B cell (primary cell): ENCODE measurements at regions of chr1 and their contacts with region 1.

Region 1: GRCh38 chr1:48677306-48678287 is 99.1 kb downstream of the BEND5 start:
- DNase-seq: peak; percentile 67
- ATAC-seq: peak; percentile 49
- H3K4me3 ChIP-seq: no peak overlapping the region
- H3K4me3 Mint-ChIP-seq: peak overlapping the region; percentile 62
- H3K27ac ChIP-seq: no peak overlapping the region
- H3K27ac Mint-ChIP-seq: no peak overlapping the region
- H3K4me1 ChIP-seq: peaks cover 0 to 8% of the 10 kb centered on the region in 2 donors
- H3K4me1 Mint-ChIP-seq: peaks cover 7% of the 10 kb centered on the region
- H3K27me3 ChIP-seq: peaks cover 0 to 2% (median 0%) of the 10 kb centered on the region in 4 experiments
- H3K27me3 Mint-ChIP-seq: peaks cover 23% of the 10 kb centered on the region
- CTCF ChIP-seq: peak; percentile 80

Region 2: DNA sequence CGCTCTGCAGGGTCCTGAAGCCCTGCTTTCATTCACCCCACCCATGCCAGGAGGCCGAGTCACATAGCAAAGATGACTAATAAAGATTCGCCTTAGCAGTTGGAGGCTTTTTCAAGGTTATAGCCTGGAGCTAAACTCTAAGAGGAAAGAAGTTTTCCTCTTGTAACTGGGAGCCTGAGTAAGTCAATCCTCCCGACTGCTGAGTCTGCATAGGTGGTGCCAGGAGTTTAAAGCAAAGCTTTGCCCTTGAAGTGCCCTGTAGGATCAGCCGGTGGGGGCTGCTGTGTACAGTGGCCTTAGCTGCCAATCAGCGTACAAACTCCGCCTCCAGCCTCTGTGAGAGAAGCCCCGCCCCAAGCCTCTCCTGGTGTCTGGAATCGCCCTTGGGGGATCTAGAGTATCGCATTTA is 58.1 kb before region 1 on chr1:
- CTCF ChIA-PET with region 1: no interaction called
- POLR2A ChIA-PET with region 1: no interaction called
- intact Hi-C with region 1: no loop called
- DNase-seq: no peak
- ATAC-seq: no peak
- H3K4me3 ChIP-seq: no peak overlapping the region
- H3K4me3 Mint-ChIP-seq: no peak overlapping the region
- H3K27ac ChIP-seq: no peak overlapping the region
- H3K27ac Mint-ChIP-seq: no peak overlapping the region
- H3K4me1 ChIP-seq: no peaks in the 10 kb centered on the region
- H3K4me1 Mint-ChIP-seq: no peaks in the 10 kb centered on the region
- H3K27me3 ChIP-seq: no peaks in the 10 kb centered on the region
- H3K27me3 Mint-ChIP-seq: peaks cover 21% of the 10 kb centered on the region
- CTCF ChIP-seq: no peak

Region 3: DNA sequence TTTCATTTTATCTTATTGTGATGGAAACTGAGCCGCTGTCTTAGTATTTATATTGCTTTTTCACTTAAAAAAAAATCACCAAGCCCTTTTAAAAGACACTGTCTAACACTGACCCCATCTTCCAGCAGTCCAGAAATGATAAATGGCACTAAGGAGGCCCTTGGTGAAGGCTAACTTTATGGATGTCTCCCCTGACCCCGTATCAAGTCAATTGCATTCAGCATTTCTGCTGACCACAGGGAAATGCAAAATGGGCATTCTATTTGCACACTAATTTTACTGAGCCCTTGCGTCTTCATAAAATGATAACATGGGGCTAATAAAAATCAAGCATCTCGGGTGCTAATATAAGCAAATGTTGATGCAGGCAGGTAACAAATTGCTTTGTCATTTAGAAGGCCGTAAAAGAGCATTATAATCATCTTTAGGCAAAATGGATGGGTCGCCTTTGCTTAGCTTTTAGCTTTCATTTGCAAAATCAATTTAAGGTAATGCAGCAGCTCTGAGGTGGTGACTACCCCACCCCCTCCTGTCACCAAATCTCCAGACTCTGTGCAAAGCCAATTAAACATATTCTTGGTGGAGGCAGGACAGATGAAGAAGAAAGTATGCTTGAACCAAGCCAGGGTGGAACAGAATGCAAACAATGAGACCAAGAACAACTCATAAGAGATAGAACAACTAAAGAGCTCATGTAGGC is 11.7 kb before region 1 on chr1:
- CTCF ChIA-PET with region 1: interaction called, 13 read pairs
- POLR2A ChIA-PET with region 1: no interaction called
- intact Hi-C with region 1: no loop called
- DNase-seq: no peak
- ATAC-seq: no peak
- H3K4me3 ChIP-seq: no peak overlapping the region
- H3K4me3 Mint-ChIP-seq: no peak overlapping the region
- H3K27ac ChIP-seq: no peak overlapping the region
- H3K27ac Mint-ChIP-seq: no peak overlapping the region
- H3K4me1 ChIP-seq: no peaks in the 10 kb centered on the region
- H3K4me1 Mint-ChIP-seq: no peaks in the 10 kb centered on the region
- H3K27me3 ChIP-seq: no peaks in the 10 kb centered on the region
- H3K27me3 Mint-ChIP-seq: peaks cover 3% of the 10 kb centered on the region
- CTCF ChIP-seq: no peak

Region 4: GRCh38 chr1:48688102-48688760 is 10.6 kb after region 1 on chr1:
- CTCF ChIA-PET with region 1: interaction called, 16 read pairs
- POLR2A ChIA-PET with region 1: no interaction called
- intact Hi-C with region 1: no loop called
- DNase-seq: no peak
- ATAC-seq: no peak
- H3K4me3 ChIP-seq: no peak overlapping the region
- H3K4me3 Mint-ChIP-seq: no peak overlapping the region
- H3K27ac ChIP-seq: no peak overlapping the region
- H3K27ac Mint-ChIP-seq: no peak overlapping the region
- H3K4me1 ChIP-seq: no peaks in the 10 kb centered on the region
- H3K4me1 Mint-ChIP-seq: peaks cover 2% of the 10 kb centered on the region
- H3K27me3 ChIP-seq: no peaks in the 10 kb centered on the region
- H3K27me3 Mint-ChIP-seq: peaks cover 5% of the 10 kb centered on the region
- CTCF ChIP-seq: peak; percentile 41

Region 5: DNA sequence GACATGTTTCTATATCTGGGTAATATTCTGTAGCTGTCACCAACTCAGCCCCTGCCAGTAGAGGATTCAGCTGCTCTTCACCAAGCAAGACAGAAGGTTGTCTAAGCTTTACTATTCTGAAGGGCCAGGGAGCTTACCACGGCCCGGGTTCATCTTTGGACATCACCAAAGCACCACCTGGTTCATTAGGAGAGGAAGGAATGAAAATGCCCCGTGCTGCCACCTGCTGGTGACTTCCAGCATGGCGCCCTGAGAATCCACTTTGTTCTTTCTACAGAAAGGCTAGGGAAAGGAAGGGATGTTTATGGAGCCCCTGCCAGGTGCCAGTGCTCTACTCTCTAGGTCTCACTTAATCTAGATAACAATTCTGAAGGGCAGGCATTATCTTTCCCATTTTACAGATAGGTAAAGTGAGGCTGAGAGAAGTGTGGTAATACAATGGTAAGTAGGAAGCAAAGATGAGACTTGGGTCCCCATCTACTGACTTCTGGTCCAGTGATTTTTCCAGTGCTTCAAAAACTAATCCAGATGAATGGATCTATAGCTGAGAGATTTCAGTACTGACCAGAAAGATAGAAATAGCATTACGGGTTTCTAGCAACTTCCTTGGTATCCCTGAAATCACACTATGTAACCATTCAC is 19.6 kb after region 1 on chr1:
- CTCF ChIA-PET with region 1: interaction called, 21 read pairs
- POLR2A ChIA-PET with region 1: no interaction called
- intact Hi-C with region 1: no loop called
- DNase-seq: peak; percentile 58
- ATAC-seq: no peak
- H3K4me3 ChIP-seq: no peak overlapping the region
- H3K4me3 Mint-ChIP-seq: no peak overlapping the region
- H3K27ac ChIP-seq: no peak overlapping the region
- H3K27ac Mint-ChIP-seq: no peak overlapping the region
- H3K4me1 ChIP-seq: no peaks in the 10 kb centered on the region
- H3K4me1 Mint-ChIP-seq: no peaks in the 10 kb centered on the region
- H3K27me3 ChIP-seq: peaks cover 0 to 6% (median 0%) of the 10 kb centered on the region in 4 experiments
- H3K27me3 Mint-ChIP-seq: peaks cover 9% of the 10 kb centered on the region
- CTCF ChIP-seq: peak; percentile 97

Region 6: DNA sequence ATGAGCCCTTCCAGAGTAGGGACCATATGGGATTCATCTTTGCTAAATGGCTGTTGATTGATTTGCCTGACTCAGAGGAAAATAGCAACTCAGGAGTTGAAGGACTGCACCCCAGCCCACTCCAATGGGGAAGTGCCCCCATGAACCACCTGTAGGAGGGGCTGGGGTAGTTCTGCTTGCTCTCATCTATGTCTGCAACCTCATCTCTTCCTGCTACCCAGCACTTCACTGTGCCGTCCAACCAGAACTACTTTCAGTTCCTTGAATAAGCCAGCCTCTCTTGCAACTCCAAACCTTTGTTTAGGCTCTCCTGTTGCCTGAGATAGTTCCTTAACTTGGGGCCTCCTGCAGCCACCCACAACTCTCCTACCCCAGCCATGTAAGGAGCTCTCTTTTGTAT is 72.5 kb after region 1 on chr1:
- CTCF ChIA-PET with region 1: interaction called, 8 read pairs
- POLR2A ChIA-PET with region 1: no interaction called
- intact Hi-C with region 1: loop called (anchors 2 kb)
- DNase-seq: peak; percentile 86
- ATAC-seq: peak; percentile 100
- H3K4me3 ChIP-seq: no peak overlapping the region
- H3K4me3 Mint-ChIP-seq: peak overlapping the region; percentile 7
- H3K27ac ChIP-seq: peak overlapping the region; percentile 36 to 74
- H3K27ac Mint-ChIP-seq: peak overlapping the region; percentile 83
- H3K4me1 ChIP-seq: peaks cover 38 to 41% of the 10 kb centered on the region in 2 donors
- H3K4me1 Mint-ChIP-seq: peaks cover 52% of the 10 kb centered on the region
- H3K27me3 ChIP-seq: no peaks in the 10 kb centered on the region
- H3K27me3 Mint-ChIP-seq: no peaks in the 10 kb centered on the region
- CTCF ChIP-seq: peak; percentile 83

Region 7: DNA sequence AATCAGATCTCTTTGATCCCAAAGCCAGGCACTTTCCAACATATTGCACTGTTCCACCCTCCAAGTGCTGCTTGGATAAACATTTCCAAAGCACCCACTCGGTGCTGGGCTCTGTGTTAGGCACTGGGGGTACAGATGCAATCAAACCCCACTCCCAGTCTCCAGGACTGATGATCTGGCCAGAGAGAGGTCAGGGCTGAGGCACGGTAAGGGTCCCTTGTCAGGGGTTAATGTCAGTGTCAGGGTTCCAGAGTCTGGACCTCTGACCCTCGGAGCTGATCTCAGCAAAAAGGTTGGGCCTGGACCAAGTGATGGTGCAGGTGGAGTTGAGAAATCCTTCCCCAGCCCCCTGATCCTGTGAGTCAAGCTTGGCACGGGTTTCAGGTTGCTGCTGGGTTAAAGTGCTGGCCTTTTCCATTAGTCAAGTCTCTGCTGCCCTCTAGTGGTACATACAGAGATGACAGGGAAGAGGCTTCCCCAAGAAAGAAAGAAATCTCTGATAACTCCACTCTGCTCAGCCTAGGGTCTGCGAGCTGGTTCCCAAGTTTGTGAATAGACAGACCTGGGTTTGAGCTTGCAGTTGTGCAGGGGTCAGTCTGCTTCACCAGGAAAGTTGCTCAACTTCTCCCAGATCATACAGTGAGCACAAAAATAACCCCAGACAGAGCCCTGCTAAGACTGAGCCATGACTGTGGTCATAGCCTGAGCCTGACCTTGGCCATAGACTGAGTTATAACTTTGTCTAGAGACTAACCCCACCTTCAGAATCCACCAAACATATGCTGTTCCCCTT is 1671.0 kb after region 1 on chr1:
- CTCF ChIA-PET with region 1: interaction called, 3 read pairs
- POLR2A ChIA-PET with region 1: no interaction called
- intact Hi-C with region 1: loop called (anchors 10 kb)
- DNase-seq: peak; percentile 62
- ATAC-seq: peak; percentile 60
- H3K4me3 ChIP-seq: no peak overlapping the region
- H3K4me3 Mint-ChIP-seq: no peak overlapping the region
- H3K27ac ChIP-seq: no peak overlapping the region
- H3K27ac Mint-ChIP-seq: no peak overlapping the region
- H3K4me1 ChIP-seq: no peaks in the 10 kb centered on the region
- H3K4me1 Mint-ChIP-seq: no peaks in the 10 kb centered on the region
- H3K27me3 ChIP-seq: peaks cover 0 to 14% (median 0%) of the 10 kb centered on the region in 4 experiments
- H3K27me3 Mint-ChIP-seq: peaks cover 26% of the 10 kb centered on the region
- CTCF ChIP-seq: peak; percentile 86